ENCODE measurements at regions of chr17 and their contacts with region 1.

Region 1: DNA sequence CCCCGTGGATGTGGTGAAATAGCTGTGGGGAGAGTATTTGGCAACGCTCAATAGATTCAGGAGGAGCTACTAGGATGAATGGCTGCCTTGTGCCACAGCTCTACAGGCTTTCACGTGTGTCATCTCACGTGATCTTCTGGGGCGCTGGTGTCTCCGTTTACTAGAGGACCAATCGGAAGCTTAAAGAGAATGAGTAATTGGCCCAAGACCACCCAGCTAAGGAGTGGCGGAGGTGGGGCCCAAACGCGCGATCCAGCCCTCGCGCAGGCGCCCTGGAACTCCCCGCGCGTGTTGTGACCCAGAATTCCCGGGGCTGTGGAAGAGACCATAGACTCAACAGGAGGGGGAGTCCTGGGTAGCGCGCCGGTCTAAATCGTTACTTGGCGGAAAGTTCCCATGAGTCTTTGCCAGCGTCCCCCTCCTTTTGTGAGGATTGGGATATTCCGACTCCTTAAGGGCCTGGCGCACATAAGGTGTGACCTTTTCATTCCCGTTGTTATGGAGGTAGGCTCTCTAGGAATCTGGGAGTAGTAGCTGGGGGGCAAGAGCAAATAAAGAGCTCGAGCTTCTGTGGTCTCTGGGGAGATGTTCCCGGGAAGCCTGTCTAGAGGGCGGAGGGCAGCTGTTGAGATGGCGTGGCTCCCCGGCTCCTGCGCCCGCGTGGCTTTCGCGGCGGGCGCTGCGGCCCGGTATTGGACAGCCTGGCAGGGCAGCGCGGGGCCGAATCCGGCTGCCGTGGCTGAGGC is 23.4 kb downstream of the TRPV2 start:
- DNase-seq: peak; percentile 89 to 99 (median 96)

Region 2: GRCh38 chr17:16363749-16364536 is 74.8 kb before region 1 on chr17:
- intact Hi-C with region 1: no loop called
- DNase-seq: peak; percentile 29 to 94 (median 84)

Region 3: DNA sequence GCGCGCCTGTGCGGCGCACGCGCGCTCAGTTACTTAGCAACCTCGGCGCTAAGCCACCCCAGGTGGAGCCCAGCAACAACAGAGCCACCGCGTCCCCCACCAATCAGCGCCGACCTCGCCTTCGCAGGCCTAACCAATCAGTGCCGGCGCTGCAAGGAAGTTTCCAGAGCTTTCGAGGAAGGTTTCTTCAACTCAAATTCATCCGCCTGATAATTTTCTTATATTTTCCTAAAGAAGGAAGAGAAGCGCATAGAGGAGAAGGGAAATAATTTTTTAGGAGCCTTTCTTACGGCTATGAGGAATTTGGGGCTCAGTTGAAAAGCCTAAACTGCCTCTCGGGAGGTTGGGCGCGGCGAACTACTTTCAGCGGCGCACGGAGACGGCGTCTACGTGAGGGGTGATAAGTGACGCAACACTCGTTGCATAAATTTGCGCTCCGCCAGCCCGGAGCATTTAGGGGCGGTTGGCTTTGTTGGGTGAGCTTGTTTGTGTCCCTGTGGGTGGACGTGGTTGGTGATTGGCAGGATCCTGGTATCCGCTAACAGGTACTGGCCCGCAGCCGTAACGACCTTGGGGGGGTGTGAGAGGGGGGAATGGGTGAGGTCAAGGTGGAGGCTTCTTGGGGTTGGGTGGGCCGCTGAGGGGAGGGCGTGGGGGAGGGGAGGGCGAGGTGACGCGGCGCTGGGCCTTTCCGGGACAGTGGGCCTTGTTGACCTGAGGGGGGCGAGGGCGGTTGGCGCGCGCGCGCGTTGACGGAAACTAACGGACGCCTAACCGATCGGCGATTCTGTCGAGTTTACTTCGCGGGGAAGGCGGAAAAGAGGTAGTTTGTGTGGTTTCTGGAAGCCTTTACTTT is 57.9 kb before region 1 on chr17 and contains the start of gene UBB:
- intact Hi-C with region 1: loop called (anchors 2 kb)
- DNase-seq: peak; percentile 92 to 98 (median 96)

Measured in head of caudate nucleus (tissue), 42 donors.